Upper lobe of right lung (tissue), 1 donor: ENCODE measurements at regions of chr12 and their contacts with region 1.

Region 1: GRCh38 chr12:123905319-123905925 is 67.2 kb downstream of the CCDC92 start:
- DNase-seq: no peak
- ATAC-seq: peak; percentile 84
- H3K4me3 ChIP-seq: no peak overlapping the region
- H3K27ac ChIP-seq: no peak overlapping the region
- H3K4me1 ChIP-seq: no peaks in the 10 kb centered on the region
- H3K27me3 ChIP-seq: no peaks in the 10 kb centered on the region
- CTCF ChIP-seq: peak; percentile 86

Region 2: DNA sequence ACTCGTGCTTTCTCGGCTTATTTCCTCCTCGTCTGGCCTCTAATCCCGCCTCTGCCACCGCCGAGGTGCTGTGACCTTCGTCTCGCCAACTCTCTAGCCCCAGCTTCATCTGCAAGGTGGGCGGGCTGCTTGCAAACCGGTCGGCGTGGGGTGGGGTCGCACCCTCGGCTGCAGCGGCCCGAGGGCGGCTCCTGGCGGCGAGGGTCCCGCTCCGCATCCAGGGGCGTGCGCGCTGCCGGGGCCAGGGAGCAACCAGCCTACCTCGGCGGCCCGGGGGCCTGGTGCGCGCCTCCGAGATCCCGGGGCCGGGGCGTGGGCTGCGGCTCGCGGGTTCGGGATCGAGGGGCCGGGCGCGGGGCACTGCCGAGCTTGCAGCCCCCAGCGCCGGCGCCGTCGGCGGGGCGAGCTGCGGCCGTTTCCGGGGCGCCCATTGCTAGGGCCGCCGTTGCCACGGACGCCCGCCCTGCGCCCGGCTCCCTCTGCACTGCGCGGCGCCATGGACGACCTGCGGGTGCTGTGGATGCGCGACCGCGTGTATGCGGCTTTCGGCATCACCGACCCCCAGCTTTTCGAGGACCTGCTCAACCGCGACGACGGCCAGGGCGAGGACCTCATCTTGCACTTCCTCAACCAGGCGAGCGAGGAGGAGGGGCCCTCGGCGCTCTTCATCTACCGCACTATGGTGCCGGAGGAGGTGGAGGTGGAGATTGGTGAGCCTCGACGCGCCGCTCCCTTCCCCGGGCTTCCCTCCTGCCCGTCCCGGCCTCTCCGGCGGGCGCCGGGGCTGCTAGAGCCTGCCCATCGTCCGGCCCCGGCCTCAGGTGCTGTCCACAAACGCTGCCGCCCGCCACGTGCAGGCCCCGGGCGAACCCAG is 143.3 kb before region 1 on chr12 and contains the start of gene DNAH10:
- intact Hi-C with region 1: no loop called
- DNase-seq: peak; percentile 73
- ATAC-seq: peak; percentile 75
- H3K4me3 ChIP-seq: peak within 1 kb of the TSS; percentile 50
- H3K27ac ChIP-seq: no peak within 1 kb of the TSS
- H3K4me1 ChIP-seq: peaks cover 11% of the 10 kb centered on the region
- H3K27me3 ChIP-seq: no peaks in the 10 kb centered on the region
- CTCF ChIP-seq: peak; percentile 18
- total RNA-seq, gene DNAH10: 0.23 TPM

Region 3: GRCh38 chr12:123983822-123984485 is 78.5 kb after region 1 on chr12:
- intact Hi-C with region 1: loop called (anchors 10 kb)
- DNase-seq: no peak
- ATAC-seq: peak; percentile 88
- H3K4me3 ChIP-seq: no peak overlapping the region
- H3K27ac ChIP-seq: no peak overlapping the region
- H3K4me1 ChIP-seq: peaks cover 27% of the 10 kb centered on the region
- H3K27me3 ChIP-seq: no peaks in the 10 kb centered on the region
- CTCF ChIP-seq: peak; percentile 69